ENCODE measurements at regions of chr9 and their contacts with region 1.

Region 1: GRCh38 chr9:16207161-16207560 is 654.3 kb downstream of the CCDC171 start:
- DNase-seq: peak in 5 of 9 experiments; percentile 12 to 50 (median 21)
- ATAC-seq: peak; percentile 36
- H3K4me3 ChIP-seq: no peak overlapping the region
- H3K4me3 Mint-ChIP-seq: peak overlapping the region; percentile 44
- H3K27ac ChIP-seq: no peak overlapping the region
- H3K27ac Mint-ChIP-seq: no peak overlapping the region
- H3K4me1 ChIP-seq: no peaks in the 10 kb centered on the region
- H3K4me1 Mint-ChIP-seq: peaks cover 11% of the 10 kb centered on the region
- H3K27me3 ChIP-seq: no peaks in the 10 kb centered on the region
- H3K27me3 Mint-ChIP-seq: peaks cover 3% of the 10 kb centered on the region
- CTCF ChIP-seq: no peak

Region 2: DNA sequence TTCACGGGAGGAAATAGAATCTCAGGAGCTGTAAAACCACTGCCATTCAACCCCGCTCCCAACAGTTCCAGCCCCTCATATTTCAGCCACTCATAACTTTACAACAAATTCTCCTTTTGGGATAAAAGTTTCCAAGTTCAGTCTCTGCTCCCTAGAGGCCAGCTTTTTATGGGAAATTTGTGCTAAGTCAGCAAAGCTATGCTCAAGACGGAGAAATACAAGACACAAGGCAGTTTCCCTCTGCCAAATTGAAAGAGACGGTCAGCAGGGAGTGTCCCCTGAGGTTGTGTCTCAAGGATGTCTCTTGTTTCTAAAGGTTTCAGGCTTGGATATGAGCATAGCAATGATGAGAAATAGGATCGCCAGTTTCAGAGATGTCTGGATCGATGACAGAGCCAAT is 45.7 kb before region 1 on chr9:
- CTCF ChIA-PET with region 1: no interaction called
- POLR2A ChIA-PET with region 1: no interaction called
- intact Hi-C with region 1: loop called in 1 of 2 experiments (anchors 5 kb)
- DNase-seq: no peak
- ATAC-seq: no peak
- H3K4me3 ChIP-seq: no peak overlapping the region
- H3K4me3 Mint-ChIP-seq: no peak overlapping the region
- H3K27ac ChIP-seq: no peak overlapping the region
- H3K27ac Mint-ChIP-seq: no peak overlapping the region
- H3K4me1 ChIP-seq: no peaks in the 10 kb centered on the region
- H3K4me1 Mint-ChIP-seq: no peaks in the 10 kb centered on the region
- H3K27me3 ChIP-seq: no peaks in the 10 kb centered on the region
- H3K27me3 Mint-ChIP-seq: no peaks in the 10 kb centered on the region
- CTCF ChIP-seq: no peak

Measured in CD8-positive, alpha-beta T cell (primary cell).